ENCODE measurements at regions of chr1 and their contacts with region 1.

Region 1: DNA sequence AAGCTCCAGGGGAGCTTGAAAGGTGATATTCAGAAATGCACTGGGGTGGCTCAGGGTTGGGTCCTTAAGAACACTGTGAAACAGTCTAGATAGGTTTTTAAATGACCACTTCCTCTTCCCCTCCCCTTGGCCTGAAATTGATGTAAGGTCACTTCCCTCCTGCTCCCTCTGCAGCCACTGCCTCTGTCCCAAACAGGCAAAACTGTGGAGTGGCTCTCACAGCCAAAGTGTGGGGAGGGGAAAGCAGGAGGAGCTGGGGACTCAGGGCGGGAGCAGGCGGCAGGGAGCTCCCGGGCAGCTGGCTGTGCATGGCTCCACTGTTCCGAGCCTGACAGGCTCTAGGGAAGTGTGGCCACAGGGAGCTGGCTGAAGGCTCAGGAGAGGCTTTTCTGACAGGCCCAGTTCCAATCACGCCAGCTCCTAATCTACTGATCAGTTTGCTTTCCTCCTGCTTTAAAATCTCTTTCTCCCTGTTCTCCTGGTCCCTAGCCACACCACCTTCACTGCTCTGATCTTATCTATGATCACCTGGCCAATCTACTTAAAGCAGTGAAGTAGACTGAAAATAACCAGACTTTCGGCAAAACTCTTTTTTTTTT is 5.1 kb upstream of the CSRP1 start:
- H3K4me3 ChIP-seq: no peak overlapping the region
- H3K27ac ChIP-seq: no peak overlapping the region
- H3K4me1 ChIP-seq: no peaks in the 10 kb centered on the region
- CTCF ChIP-seq: no peak

Region 2: DNA sequence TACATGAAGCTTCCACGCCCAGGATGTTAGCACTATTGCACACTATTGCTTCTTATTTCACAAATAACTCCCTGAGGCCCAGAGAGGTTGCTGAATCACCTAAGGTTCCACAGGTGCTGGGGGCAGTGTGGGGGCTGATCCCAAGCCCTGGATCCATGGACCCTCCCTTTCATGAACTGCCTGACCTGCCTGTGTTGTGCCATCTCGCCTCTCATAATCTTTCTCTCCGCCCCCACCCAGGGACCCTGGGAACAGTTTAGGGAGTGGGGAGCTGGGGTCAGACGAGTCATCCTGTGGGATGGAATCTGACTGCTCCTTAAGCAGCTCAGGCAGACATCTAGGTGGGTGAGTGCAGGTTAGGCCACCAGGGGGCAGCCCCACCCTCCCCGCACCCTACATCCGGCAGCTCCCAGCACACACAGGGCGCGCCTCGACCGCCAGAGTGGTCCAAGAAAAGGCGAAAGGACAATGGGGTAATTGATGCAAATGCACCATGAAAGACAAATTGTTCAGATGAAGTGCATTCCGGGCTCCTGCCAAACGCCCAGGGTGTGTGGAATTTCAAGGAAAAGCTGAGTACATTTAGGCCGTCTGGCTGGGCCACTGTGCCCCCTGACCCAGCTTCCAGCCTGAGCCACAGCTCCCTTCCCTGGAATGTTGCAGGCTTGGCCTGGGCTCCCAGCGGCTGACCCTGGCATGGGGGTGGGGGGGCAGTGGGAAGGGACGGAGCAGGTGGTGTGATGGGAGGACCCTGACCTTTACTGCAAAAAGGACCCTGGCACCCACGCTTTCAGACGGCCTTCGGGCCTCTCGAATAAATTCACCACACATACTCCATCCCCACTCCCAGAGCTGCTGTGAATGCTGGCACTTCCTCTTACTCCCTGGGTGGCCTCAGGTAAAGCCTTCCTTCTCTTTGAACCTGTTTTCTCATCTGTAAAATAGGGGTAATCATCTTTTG is 63.8 kb before region 1 on chr1:
- CTCF ChIA-PET with region 1: interaction called, 129 read pairs
- POLR2A ChIA-PET with region 1: no interaction called
- H3K4me3 ChIP-seq: no peak overlapping the region
- H3K27ac ChIP-seq: no peak overlapping the region
- H3K4me1 ChIP-seq: 0 out of 2 replicates have a peak, but pooled peaks cover 6% of the 10 kb centered on the region
- CTCF ChIP-seq: peak; percentile 66

Region 3: DNA sequence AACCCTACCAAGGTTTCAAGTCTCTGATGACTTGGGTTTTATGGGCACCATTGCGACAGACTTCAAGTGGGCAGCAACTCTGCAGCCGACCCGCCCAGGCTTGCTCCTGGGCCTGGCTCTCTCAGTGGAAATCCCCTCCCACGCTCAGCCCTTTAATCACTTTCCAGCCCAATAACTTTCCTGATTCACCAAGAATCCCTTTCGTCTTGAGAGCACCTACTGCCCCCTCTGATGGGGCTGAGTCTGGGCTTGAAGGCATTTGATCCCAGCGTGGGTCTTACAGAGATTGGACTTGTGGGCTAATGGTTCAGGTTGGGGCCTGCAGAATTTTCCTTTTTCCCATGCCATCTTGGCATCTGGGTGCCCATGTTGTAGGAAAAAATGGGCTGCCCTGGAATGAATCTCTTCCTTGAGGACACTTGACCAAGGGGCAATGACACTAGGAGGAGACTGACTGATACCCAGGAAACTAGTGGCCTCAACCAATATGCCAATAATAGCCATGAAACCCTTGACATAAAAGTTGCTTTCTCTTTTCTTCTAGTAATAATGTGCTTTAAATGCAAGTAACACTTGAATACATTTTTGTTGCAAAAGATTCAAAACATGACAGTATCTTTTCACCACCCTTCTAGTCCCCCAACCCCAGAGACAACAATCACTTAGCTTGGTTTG is 35.2 kb before region 1 on chr1:
- CTCF ChIA-PET with region 1: interaction called, 471 read pairs
- POLR2A ChIA-PET with region 1: interaction called, 42 read pairs
- H3K4me3 ChIP-seq: no peak overlapping the region
- H3K27ac ChIP-seq: no peak overlapping the region
- H3K4me1 ChIP-seq: no peaks in the 10 kb centered on the region
- CTCF ChIP-seq: no peak

Region 4: GRCh38 chr1:201495471-201496295 is 16.4 kb before region 1 on chr1:
- CTCF ChIA-PET with region 1: interaction called, 471 read pairs
- POLR2A ChIA-PET with region 1: interaction called, 4 read pairs
- H3K4me3 ChIP-seq: no peak overlapping the region
- H3K27ac ChIP-seq: no peak overlapping the region
- H3K4me1 ChIP-seq: no peaks in the 10 kb centered on the region
- CTCF ChIP-seq: no peak

Region 5: DNA sequence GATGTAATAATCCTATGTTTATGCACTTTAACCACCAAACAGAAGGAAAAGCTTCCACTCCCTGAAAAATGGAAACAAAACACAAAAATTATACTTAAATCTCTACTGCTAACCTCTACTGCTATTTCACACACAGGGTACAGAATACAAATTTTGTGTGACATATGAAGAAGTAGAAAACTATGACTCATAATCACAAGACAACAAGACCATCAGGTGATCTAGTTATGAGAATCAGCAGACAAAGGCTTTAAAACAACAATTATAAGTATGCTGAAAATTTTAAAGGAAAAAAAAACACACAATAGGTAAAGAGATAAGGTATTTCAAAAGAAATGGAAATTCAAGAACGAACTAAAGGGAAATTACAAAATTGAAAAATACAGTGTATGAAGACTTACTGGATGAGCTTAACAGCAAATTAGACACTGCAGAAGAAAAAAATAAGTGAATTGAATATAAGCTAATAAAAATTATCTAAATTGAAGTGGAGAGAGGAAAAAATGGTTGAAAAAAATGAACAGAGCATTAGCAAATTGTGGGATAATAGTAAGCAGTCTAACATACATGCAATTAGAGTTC is 13.2 kb after region 1 on chr1:
- CTCF ChIA-PET with region 1: interaction called, 36 read pairs
- POLR2A ChIA-PET with region 1: no interaction called
- H3K4me3 ChIP-seq: no peak overlapping the region
- H3K27ac ChIP-seq: no peak overlapping the region
- H3K4me1 ChIP-seq: no peaks in the 10 kb centered on the region
- CTCF ChIP-seq: no peak

Region 6: DNA sequence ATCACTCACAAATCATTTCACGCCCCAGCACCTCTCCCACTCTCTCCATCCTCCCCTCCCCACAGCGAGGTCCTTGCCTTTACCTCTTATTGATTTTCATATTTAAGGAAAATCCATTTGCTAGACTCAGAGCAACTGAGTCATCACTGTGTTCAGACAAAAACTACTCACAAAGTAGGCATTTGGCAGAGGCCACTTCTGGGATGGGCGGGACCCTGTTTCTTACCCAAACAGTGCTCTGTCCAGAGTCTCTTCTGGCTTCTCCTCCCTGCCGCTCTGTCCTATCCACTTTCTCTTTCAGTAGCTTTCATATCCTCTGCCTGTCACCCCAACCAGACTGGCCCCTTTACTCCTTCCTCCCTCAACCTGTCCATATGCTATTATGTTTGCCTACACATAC is 24.5 kb after region 1 on chr1:
- CTCF ChIA-PET with region 1: interaction called, 36 read pairs
- POLR2A ChIA-PET with region 1: no interaction called
- H3K4me3 ChIP-seq: no peak overlapping the region
- H3K27ac ChIP-seq: no peak overlapping the region
- H3K4me1 ChIP-seq: peaks cover 4% of the 10 kb centered on the region; the same call in 1 of the 2 replicates
- CTCF ChIP-seq: no peak